GM10248 (cell line): ENCODE measurements at regions of chr15 and their contacts with region 1.

Region 1: GRCh38 chr15:90249203-90249863 is at the start of gene TTLL13:
- DNase-seq: peak; percentile 55
- CTCF ChIP-seq: no peak

Region 2: GRCh38 chr15:90259524-90259923 is 10.2 kb after region 1 on chr15:
- CTCF ChIA-PET with region 1: interaction called, 10 read pairs
- POLR2A ChIA-PET with region 1: interaction called, 3 read pairs
- DNase-seq: peak; percentile 40
- CTCF ChIP-seq: no peak